ENCODE measurements at regions of chr1 and their contacts with region 1.

Region 1: DNA sequence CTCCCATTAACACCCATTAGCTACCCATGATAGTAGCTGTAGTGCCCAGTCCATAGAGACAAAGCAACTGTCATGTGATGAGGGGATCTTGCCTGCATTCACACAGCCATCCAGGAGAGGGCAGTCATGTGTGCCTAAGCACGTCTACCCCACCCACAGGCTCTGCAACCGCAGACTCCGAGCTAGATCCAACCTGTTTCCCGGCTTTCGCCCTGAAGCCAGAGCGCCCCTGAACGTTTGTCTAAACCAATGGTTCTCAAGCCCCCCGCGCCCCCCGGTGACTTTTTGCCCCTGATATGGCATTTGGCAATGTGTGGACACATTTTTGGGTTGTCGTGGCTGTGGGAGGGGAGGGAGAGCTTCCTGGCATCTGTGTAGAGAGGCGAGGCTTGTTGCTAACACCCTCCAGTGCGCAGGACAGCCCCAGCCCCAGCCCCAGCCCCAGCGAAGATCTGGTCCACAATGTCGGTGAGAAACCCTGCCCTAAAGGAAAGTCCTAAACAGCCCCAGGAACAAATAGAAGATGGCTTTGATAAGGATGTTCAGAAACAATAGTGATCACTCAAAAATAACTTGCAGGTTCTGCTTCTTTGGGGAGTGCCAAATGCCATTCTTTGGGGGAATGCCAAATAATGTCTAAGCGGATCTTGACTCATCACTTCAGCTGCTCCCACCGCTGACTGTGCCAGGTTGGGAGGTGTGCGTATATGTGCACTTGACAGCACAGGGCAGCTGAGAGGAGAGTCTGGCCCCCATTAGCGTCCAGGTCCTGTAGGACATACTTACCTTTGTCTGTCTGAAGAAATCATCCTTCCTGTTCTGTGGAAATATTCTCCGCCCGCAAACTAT is 34.5 kb downstream of the SLC44A3 start:
- DNase-seq: peak; percentile 90
- ATAC-seq: peak; percentile 95
- H3K4me3 Mint-ChIP-seq: no peak overlapping the region
- H3K27ac Mint-ChIP-seq: no peak overlapping the region
- H3K4me1 Mint-ChIP-seq: no peaks in the 10 kb centered on the region
- H3K27me3 Mint-ChIP-seq: peaks cover 4% of the 10 kb centered on the region

Region 2: DNA sequence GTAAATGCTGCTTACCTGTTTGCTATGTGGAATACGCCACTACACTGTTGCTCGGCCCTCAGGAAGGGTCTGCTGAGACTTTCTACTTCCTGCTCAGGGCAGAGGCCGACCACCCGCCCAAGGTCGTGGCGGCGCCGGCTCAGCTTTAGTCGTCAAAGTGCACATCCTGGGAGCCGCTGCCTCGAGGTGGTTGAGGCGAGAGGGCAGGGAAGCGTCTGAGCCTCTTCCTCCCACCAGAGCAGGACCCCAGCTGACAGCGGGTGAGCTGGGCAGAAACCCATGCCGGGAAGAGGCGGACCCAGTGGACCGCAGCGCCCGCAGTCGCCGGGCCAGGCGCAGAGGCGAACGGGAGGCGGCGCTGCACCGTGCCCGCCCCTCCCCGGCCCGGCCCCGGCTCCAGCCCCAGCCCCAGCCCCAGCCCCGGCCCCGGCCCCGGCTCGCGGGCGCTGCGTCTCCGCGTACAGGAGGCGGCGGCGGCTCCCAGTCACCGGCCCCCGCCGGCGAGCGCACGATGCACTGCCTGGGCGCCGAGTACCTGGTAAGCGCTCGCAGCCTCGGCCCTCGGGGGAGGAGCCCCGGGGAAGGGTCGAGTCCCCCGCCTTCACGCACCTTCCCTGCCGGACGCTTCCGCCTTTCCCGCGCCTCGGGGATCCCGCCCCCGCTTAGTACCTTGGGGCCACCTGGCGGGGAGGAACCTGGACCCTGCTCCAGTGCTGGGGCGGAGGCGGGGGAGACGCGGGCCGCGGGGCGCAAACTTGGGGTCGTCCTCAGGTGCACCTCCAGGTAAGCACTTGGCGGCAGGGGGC is 34.5 kb before region 1 on chr1 and contains the start of gene SLC44A3:
- CTCF ChIA-PET with region 1: interaction called, 8 read pairs
- POLR2A ChIA-PET with region 1: no interaction called
- intact Hi-C with region 1: loop called in 1 of 2 experiments (anchors 1 kb)
- DNase-seq: peak; percentile 63
- ATAC-seq: peak; percentile 78
- H3K4me3 Mint-ChIP-seq: peak within 1 kb of the TSS; percentile 57
- H3K27ac Mint-ChIP-seq: no peak within 1 kb of the TSS
- H3K4me1 Mint-ChIP-seq: no peaks in the 10 kb centered on the region
- H3K27me3 Mint-ChIP-seq: peaks cover 42% of the 10 kb centered on the region
- total RNA-seq, gene SLC44A3: not detected

Region 3: GRCh38 chr1:94843430-94843829 is 11.3 kb before region 1 on chr1:
- CTCF ChIA-PET with region 1: interaction called, 13 read pairs
- POLR2A ChIA-PET with region 1: no interaction called
- intact Hi-C with region 1: no loop called
- DNase-seq: no peak
- ATAC-seq: no peak
- H3K4me3 Mint-ChIP-seq: no peak overlapping the region
- H3K27ac Mint-ChIP-seq: no peak overlapping the region
- H3K4me1 Mint-ChIP-seq: no peaks in the 10 kb centered on the region
- H3K27me3 Mint-ChIP-seq: peaks cover 7% of the 10 kb centered on the region

Region 4: GRCh38 chr1:94926915-94927404 is 72.3 kb after region 1 on chr1 and contains the start of gene CNN3:
- CTCF ChIA-PET with region 1: interaction called, 3 read pairs
- POLR2A ChIA-PET with region 1: no interaction called
- intact Hi-C with region 1: loop called in 1 of 2 experiments (anchors 2 kb)
- DNase-seq: peak; percentile 80
- ATAC-seq: peak; percentile 87
- H3K4me3 Mint-ChIP-seq: peak within 1 kb of the TSS; percentile 69
- H3K27ac Mint-ChIP-seq: peak within 1 kb of the TSS; percentile 74
- H3K4me1 Mint-ChIP-seq: peaks cover 13% of the 10 kb centered on the region
- H3K27me3 Mint-ChIP-seq: peaks cover 35% of the 10 kb centered on the region
- total RNA-seq, gene CNN3: 2.5 to 3.1 TPM

Region 5: DNA sequence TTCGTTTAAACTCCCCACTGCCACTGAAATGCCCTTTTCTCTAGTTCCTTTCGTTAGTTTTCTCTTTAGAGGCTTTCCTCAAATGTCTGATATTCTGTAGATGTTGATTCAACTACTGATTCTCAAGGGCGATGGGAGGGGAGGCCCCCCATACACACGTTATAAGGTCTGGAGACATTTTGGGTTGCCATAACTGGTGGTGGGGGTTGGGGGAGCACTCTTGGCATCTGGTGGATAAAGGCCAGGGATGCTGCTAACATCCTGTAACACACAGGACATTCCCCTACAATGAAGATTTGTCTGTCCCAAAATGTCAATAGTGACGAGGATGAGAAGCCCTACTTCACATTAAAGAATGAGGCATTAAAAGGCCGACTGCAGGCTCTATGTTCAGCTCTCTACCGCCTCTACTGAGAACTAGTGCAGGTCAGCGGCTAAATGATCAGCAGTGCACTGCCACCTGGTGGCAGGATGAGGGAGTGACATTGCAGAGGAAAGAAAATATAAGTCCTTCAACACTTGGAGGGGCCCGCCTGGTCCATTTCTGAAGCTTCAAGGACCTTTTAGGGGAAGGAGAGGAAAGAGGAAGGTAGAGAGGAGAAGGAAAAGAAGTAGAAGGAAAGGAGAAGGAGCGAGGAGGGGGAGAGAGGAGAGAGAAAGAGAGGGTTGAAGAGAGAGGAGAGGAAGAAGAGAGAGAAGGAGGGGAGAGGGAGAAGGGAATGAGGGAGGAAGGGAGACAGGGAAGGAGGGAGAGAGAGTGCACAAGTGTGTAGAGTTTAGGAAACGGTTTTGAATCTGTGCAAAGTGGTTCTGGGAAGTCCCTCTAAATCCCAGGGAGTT is 188.7 kb after region 1 on chr1:
- CTCF ChIA-PET with region 1: interaction called, 124 read pairs
- POLR2A ChIA-PET with region 1: no interaction called
- intact Hi-C with region 1: loop called (anchors 1 kb)
- DNase-seq: peak; percentile 86
- ATAC-seq: peak; percentile 95
- H3K4me3 Mint-ChIP-seq: no peak overlapping the region
- H3K27ac Mint-ChIP-seq: no peak overlapping the region
- H3K4me1 Mint-ChIP-seq: no peaks in the 10 kb centered on the region
- H3K27me3 Mint-ChIP-seq: no peaks in the 10 kb centered on the region

Region 6: DNA sequence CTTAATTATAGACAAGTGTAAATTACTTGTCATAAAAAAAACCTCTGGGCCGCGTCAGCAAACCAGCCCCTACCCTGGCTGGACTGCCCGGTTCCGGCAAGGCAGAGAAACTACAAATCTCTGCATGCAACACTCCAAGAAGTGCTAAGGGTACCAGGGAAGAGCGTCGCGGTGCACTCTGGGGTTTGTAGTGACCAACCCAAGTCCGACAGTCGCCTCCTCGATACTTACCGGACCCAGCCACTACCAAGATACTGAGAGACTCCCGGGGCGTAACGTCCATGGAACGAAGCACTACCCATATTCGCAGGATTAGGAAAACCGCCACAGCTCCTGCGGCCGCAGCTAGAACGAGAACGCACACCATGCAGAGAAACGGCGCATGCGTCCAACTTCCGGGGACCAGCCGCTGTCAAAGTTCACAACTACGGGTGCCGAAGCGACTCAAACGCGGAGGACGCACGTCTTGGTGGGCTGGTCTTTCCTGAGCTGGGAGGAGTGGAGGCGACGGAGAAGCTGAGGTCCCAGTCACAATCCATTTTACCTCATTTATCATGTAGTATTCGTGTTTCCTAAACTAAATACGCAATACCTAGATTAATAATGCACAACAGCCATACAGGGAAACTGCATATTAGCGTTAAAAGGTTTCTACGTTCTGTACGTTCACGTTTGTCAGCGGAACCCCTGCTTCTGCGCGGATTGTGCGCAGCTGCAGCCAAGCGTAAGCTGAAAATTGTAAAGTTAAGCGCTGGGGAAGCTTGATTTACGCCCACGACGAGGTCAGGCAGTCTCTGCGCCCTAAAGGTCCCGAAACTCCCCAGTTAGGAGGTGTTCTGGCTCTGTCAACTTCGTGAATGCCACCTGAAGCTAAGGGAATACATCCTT is 218.1 kb after region 1 on chr1 and contains the start of gene ALG14:
- CTCF ChIA-PET with region 1: interaction called, 7 read pairs
- POLR2A ChIA-PET with region 1: no interaction called
- intact Hi-C with region 1: loop called in 1 of 2 experiments (anchors 1 kb)
- DNase-seq: peak; percentile 95
- ATAC-seq: peak; percentile 97
- H3K4me3 Mint-ChIP-seq: peak within 1 kb of the TSS; percentile 91
- H3K27ac Mint-ChIP-seq: peak within 1 kb of the TSS; percentile 98
- H3K4me1 Mint-ChIP-seq: peaks cover 17% of the 10 kb centered on the region
- H3K27me3 Mint-ChIP-seq: peaks cover 2% of the 10 kb centered on the region
- total RNA-seq, gene ALG14: 5.3 to 7.3 TPM

Measured in activated CD4-positive, alpha-beta T cell treated with anti-CD3 and anti-CD28 coated beads for 36 hours (primary cell).